ENCODE measurements at regions of chr2 and their contacts with region 1.

Region 1: DNA sequence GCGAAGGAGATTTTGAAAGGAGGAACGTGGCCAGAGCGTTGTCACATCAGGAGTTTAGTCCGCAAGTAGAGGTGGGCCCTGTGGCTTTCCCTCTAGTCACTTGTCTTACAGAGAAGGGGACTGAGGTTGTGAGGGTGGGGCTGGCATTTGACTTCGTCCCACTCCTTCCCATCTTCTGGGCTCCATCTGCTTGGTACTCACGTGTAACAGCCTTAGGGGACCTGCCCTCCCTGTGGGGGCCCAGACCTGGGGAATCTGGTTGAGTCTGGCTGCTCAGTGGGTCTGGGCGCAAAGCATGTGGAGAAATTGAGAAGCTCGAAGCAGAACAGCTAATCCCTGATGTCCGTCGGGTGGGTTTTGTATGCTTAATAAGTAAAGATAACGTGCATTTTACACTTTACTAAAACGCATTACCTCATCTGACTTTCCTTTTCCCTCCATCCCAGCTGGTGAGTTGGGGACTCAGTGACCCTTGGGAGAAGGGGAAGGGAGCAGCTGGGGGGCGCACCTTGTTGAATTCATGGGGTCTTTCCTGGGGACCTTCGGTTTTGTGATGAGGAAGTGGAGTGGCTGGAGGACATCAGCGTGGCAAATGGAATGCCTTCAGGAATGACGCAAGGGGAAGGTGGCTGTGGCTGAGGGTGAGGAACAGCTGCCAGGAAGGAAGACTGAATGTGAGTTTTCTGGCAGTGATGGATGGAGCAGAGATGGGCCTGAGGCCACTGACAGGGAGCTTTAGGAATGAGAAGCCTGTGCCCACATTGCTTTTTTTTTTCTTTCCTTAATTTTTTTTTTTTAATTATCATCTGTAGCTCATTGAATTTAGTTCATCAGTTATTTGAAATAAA is 44.8 kb downstream of the ASAP2 start:
- DNase-seq: no peak
- H3K4me3 ChIP-seq: no peak overlapping the region
- H3K27ac ChIP-seq: no peak overlapping the region
- H3K27me3 ChIP-seq: no peaks in the 10 kb centered on the region
- CTCF ChIP-seq: no peak

Region 2: GRCh38 chr2:9300214-9300613 is 48.8 kb after region 1 on chr2:
- intact Hi-C with region 1: no loop called
- DNase-seq: no peak
- H3K4me3 ChIP-seq: no peak overlapping the region
- H3K27ac ChIP-seq: peak overlapping the region in 37 of 59 donors; percentile 0 to 88 (median 45)
- H3K27me3 ChIP-seq: no peaks in the 10 kb centered on the region
- CTCF ChIP-seq: no peak

Region 3: DNA sequence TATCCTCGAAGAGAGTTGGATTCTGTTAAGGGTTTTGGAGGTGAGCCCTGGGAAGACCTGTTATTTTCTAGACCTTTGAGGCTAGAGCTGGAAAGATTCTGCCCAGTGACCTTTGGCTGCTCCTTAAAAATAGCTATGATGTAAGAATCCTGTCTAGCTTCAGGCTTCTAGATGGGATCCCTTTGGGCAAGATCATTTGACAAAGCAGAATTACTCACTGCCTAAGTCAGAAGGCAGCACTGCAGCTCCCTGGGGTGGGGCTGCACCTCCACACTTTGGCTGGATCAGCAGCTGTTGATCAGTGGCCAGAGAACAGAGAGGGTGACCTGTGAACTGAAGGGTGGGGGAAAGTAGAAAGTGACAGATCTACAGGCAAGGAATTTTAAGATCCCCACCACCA is 59.0 kb after region 1 on chr2:
- intact Hi-C with region 1: loop called in 1 of 2 experiments (anchors 5 kb)
- DNase-seq: no peak
- H3K4me3 ChIP-seq: no peak overlapping the region
- H3K27ac ChIP-seq: peak overlapping the region in 48 of 59 donors; percentile 4 to 81 (median 57)
- H3K27me3 ChIP-seq: no peaks in the 10 kb centered on the region
- CTCF ChIP-seq: no peak